ENCODE measurements at regions of chr1 and their contacts with region 1.

Region 1: DNA sequence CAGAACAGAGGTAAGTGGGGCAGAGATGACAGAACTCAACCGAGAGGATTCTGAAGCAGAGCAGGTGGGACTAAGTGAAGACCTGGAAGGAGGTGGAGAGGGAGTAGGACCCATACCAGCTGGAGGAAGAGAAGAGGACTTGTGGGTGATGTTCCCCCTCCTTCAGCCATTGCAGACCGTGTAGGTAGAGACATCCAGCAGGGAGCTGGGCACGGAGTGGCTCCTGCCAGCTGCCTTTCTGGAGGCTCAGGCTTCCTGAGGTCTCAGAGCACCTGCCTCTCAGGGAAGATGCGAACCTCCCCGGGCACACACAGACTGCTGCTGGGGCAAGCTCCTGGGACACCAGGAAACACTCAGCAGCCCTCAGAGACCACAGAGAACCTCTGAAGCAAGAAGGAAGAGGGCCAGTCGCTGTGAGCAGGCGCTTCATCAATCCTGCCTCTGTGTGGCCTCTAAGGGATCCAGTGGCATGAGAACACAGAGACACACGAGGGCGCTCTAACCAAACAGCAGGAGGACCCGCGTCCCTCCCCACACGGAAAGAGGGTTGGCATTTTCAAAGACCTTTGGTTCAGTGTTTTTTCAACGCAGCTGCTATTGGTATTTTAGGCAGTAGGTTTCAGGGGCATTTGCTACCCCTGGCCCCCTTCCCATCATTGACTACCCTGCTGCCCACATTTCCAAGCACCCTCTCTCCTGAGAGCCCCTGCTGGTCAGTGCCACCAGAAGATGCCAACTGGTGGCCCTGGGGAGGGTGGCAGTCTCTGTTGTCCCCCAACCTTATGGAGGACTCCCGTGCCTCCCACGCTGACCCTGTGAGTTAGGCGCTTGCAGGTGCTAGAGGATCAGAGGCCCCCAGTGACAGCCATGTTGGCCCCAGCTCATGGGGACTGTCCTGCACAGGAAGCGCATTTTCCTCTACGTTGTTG is 89.6 kb upstream of the EDN2 start:
- DNase-seq: peak; percentile 74 to 93 (median 83)
- H3K4me3 ChIP-seq: no peak overlapping the region
- H3K27ac ChIP-seq: no peak overlapping the region
- H3K4me1 ChIP-seq: peaks cover 0 to 4% of the 10 kb centered on the region in 2 donors
- H3K27me3 ChIP-seq: no peaks in the 10 kb centered on the region
- CTCF ChIP-seq: peak; percentile 76 to 94 (median 88)
- POLR2A ChIP-seq: no peak

Region 2: DNA sequence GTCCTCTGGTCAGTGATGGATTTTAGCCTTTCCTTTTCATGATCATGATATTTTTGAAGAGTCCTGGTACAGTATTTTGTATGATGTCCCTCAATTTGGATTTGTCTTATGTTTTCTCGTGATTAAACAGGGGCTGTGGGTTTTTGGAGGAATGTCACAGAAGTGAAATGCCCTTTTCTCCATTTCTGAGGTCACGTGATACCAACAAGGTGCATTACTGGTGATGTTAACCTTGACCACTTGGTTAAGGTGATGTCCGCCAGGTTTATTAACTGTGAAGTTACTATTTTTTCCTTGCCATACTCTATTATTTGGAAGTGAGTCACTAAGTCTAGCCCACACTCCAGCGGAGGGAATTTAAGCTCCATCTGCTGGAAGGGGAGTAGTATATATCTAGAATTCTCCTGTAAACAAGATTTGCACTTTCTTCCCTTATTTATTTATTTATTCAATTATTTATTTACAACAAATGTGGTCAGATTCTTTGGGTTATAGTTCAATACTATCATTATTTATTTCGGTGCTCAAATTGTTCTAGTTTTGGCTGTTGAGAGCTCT is 221.2 kb after region 1 on chr1:
- intact Hi-C with region 1: loop called (anchors 10 kb)
- DNase-seq: peak in 1 of 7 donors; percentile 10
- H3K4me3 ChIP-seq: no peak overlapping the region
- H3K27ac ChIP-seq: no peak overlapping the region
- H3K4me1 ChIP-seq: peaks cover 0 to 5% of the 10 kb centered on the region in 2 donors
- H3K27me3 ChIP-seq: no peaks in the 10 kb centered on the region
- CTCF ChIP-seq: peak in 5 of 6 experiments; percentile 7 to 38 (median 26)
- POLR2A ChIP-seq: no peak

Region 3: DNA sequence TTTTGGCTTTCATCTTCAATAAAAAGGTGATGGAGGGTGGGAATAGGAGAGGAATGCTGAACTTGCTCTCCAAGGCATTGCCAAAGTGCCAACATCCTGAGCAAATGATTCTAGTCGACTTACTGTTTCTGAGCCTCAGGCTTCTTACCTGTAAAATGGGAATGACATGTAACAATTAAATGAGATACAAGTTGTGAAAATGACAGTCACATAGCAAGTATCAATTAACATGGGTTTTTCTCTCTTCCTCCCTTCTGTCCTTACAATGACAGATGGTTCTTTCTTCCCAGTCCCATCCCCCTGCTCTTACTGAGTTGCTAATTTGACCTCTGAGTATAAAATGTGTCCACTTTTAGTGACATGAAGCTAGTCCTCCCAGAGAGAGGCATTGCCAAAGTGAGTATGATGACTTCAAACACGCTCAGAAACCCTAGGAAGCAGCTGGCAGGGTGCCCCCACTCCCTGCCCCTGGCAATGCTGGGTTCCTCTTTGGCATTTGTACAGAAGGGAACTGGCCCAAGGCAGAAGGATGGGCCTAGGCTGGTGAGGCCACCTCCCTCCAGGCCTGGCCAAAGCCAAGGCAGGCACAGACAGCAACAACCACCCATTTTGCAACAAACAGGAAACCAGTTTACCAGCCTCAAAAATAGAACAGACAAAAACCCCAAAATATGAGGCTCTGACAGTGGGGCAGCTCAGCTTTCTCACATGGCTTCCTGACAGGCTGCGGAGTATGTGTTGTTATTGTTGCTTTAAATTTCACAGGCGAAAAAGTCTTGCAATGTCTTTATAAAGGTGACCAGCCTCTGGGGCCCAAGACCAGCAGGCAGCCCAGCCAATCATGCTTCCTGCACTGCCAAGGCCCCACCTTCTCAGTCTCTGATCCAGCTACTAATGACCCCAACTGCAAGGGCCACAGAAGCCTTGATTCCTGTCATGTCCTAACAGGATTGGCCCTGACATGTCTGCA is 228.8 kb after region 1 on chr1:
- intact Hi-C with region 1: loop called (anchors 10 kb)
- DNase-seq: peak; percentile 54 to 80 (median 68)
- H3K4me3 ChIP-seq: no peak overlapping the region
- H3K27ac ChIP-seq: peak overlapping the region in 2 of 5 donors; percentile 49 to 68
- H3K4me1 ChIP-seq: peaks cover 0 to 18% of the 10 kb centered on the region in 2 donors
- H3K27me3 ChIP-seq: no peaks in the 10 kb centered on the region
- CTCF ChIP-seq: no peak
- POLR2A ChIP-seq: no peak

Region 4: DNA sequence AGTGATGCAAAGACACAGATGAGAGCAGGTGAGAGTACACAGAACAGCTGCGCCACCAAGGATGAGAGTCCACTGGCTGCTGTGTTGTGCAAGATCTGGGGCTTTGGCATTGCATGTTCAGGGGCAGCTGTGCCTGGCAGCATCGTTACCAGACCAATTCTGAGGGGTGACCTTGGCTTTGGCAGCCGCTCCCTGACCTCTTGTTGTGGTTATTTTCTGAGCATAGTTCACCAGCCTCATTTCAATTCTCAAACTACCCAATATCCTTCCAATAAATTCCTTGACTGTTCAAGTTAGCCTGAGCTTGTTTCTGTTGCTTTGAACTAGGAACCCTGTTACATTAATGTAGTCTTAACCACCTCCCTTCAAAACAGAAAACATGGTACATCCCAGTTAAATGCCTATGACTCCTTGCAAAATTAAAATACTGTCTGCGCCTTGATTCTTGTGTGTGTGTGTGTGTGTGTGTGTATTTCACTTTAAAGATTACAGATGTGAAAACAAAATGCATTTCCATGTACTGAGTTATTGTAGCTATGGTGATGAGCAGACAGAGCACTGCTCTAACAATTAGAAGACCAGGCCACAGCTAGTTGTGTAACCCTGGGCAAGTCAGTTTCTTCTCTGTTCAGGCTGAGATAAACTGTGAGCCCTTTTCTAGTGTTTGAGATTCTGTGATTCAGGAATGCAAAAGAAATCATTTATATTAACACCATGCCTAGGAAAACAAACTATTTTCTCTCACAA is 472.9 kb after region 1 on chr1:
- intact Hi-C with region 1: loop called in 1 of 2 experiments (anchors 10 kb)
- DNase-seq: peak in 6 of 7 donors; percentile 48 to 80 (median 62)
- H3K4me3 ChIP-seq: no peak overlapping the region
- H3K27ac ChIP-seq: no peak overlapping the region
- H3K4me1 ChIP-seq: peaks cover 0 to 9% of the 10 kb centered on the region in 2 donors
- H3K27me3 ChIP-seq: no peaks in the 10 kb centered on the region
- CTCF ChIP-seq: no peak
- POLR2A ChIP-seq: no peak